ENCODE measurements at regions of chr11 and their contacts with region 1.

Region 1: DNA sequence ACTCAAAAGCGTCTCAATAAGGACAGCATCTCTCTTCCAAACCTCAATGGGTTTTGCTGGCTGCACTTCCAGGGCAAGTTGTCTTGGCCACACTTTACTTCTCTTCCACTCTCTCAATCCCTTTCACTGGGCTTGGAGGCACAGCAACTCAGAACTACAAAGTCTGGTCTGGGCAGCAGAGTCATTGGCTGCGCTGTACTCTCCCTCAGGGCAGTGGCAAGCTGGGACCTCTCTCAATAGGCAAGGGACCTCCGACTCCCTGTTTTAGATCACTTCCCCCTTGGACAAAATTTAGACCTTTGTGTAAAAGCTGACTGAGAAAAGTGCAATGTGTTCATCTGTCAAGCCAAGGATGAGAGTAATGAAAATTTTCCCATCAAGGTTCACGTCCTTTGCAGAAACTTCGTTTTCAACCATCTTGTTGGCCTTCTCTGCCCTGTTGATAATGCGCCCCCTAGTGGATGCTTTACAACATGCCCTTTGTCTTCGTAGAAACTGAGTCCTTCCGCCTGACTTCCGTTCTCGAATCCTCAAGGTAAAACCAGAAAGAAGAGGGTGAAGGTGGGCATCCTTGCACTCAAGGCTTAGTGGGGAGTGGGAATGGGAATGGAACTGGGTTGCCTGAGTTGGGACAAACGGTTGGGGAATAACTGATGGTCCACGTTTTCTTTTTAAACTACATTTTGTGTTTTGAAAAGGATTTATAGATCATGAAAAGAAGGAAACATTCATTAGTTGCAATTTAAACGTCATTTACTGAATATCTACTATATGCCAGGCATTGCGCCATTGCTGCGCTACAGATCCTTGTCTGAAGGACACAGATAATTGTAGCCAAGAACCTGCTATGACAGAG is 99.1 kb downstream of the CD44 start:
- DNase-seq: peak in 30 of 35 experiments; percentile 17 to 83 (median 36)
- ATAC-seq: no peak
- H3K4me3 ChIP-seq: no peak overlapping the region
- H3K4me3 Mint-ChIP-seq: no peak overlapping the region
- H3K27ac ChIP-seq: no peak overlapping the region
- H3K27ac Mint-ChIP-seq: peak overlapping the region; percentile 58 to 75
- H3K4me1 ChIP-seq: peaks cover 20 to 31% of the 10 kb centered on the region in 2 experiments
- H3K4me1 Mint-ChIP-seq: peaks cover 76 to 84% (median 80%) of the 10 kb centered on the region in 3 donors
- H3K27me3 ChIP-seq: no peaks in the 10 kb centered on the region
- H3K27me3 Mint-ChIP-seq: no peaks in the 10 kb centered on the region

Region 2: DNA sequence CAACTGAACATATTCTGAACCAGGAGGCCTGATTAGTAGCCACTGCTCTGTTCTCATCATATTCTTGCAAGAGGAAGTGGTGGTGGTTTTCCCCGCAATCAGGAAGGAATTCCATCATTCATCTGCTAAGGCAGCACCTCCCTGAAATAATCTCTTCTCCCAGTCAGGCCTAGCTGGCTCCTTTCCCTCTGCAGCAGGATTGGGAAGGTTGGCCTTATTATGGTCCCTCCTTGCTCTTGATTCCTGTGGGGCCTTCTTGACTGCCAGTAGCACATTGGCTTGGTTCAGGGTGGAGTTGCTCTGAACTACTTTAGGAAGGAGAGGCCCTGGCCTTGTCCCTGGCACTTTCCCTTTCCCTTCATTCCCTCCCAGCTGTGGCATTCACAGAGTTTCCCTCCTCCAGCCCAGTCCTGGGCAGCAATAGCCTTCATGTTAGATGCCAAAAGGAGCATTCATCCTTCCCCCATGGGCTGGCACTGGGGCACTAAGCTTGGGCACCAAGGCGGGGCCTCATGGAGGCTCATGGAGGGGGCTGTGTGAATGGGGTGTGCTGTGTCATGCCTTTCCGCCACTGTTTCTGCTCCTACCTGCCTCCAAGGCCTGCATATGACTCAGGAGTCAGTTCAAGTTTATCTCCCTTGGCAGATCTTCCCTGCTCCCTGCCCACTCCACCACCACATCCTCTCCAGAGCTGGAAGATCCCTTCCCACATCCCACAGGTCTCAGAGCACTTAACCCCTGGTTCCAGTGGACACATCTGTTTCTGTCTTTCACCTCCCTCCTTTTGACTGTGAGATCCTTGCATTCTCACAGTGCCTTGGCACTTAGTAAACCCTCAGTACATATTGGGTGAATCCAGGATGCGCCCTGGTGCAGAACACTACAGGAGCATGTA is 126.7 kb before region 1 on chr11:
- CTCF ChIA-PET with region 1: no interaction called
- POLR2A ChIA-PET with region 1: no interaction called
- DNase-seq: no peak
- ATAC-seq: no peak
- H3K4me3 ChIP-seq: no peak overlapping the region
- H3K4me3 Mint-ChIP-seq: peak overlapping the region in 1 of 3 donors; percentile 27
- H3K27ac ChIP-seq: no peak overlapping the region
- H3K27ac Mint-ChIP-seq: peak overlapping the region in 1 of 2 donors; percentile 6
- H3K4me1 ChIP-seq: peaks cover 14 to 26% of the 10 kb centered on the region in 2 experiments
- H3K4me1 Mint-ChIP-seq: peaks cover 57 to 67% (median 61%) of the 10 kb centered on the region in 3 donors
- H3K27me3 ChIP-seq: no peaks in the 10 kb centered on the region
- H3K27me3 Mint-ChIP-seq: no peaks in the 10 kb centered on the region

Region 3: GRCh38 chr11:35200811-35201341 is 37.2 kb before region 1 on chr11:
- CTCF ChIA-PET with region 1: no interaction called
- POLR2A ChIA-PET with region 1: no interaction called
- DNase-seq: no peak
- ATAC-seq: no peak
- H3K4me3 ChIP-seq: no peak overlapping the region
- H3K4me3 Mint-ChIP-seq: no peak overlapping the region
- H3K27ac ChIP-seq: no peak overlapping the region
- H3K27ac Mint-ChIP-seq: peak overlapping the region; percentile 13 to 79
- H3K4me1 ChIP-seq: peaks cover 0 to 5% of the 10 kb centered on the region in 2 experiments
- H3K4me1 Mint-ChIP-seq: peaks cover 78 to 88% (median 84%) of the 10 kb centered on the region in 3 donors
- H3K27me3 ChIP-seq: no peaks in the 10 kb centered on the region
- H3K27me3 Mint-ChIP-seq: no peaks in the 10 kb centered on the region

Region 4: DNA sequence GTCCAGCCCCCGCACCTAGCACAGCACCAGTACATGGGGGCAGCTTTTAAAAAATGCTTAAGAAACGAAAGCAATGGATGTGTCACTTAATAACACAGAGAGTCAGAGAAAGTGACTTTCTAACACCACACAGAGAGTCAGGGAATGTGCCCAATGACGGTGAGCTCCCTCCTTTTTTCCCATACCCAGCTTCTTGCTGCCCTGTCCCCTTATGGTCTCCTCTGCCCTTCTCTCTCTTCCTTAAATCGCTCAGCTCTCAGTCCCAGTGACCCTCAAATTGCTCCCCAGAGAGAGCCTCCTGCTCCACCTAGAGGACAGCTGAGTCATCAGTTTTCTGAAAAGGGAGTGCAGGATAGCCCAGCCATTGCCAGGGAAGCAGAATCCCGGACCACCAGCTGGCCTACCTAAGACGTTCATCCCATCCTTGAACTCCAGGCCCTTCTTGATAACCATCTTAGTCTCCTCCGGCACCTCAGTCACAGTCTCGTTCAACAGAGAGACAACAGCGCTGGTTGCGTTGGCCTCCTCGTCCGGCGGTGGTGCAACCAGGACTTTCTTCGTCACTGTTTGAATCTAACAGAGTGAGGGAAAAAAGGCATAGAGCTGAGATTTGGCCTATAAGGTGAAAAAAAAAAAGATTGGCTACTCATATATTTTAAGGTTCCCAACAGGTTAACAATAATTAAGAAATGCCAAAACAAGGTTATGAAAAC is 67.7 kb after region 1 on chr11:
- CTCF ChIA-PET with region 1: interaction called, 4 to 13 read pairs
- POLR2A ChIA-PET with region 1: interaction called in 1 of 2 experiments, 3 read pairs
- DNase-seq: peak in 32 of 35 experiments; percentile 6 to 72 (median 26)
- ATAC-seq: peak; percentile 58 to 85 (median 78)
- H3K4me3 ChIP-seq: no peak overlapping the region
- H3K4me3 Mint-ChIP-seq: peak overlapping the region; percentile 5 to 69 (median 68)
- H3K27ac ChIP-seq: no peak overlapping the region
- H3K27ac Mint-ChIP-seq: peak overlapping the region; percentile 80 to 89
- H3K4me1 ChIP-seq: peaks cover 0 to 11% of the 10 kb centered on the region in 2 experiments
- H3K4me1 Mint-ChIP-seq: peaks cover 23 to 34% (median 25%) of the 10 kb centered on the region in 3 donors
- H3K27me3 ChIP-seq: no peaks in the 10 kb centered on the region
- H3K27me3 Mint-ChIP-seq: no peaks in the 10 kb centered on the region

Region 5: GRCh38 chr11:36631774-36632173 is 1393.7 kb after region 1 on chr11:
- CTCF ChIA-PET with region 1: no interaction called
- POLR2A ChIA-PET with region 1: no interaction called
- DNase-seq: no peak
- ATAC-seq: peak in 1 of 4 experiments; percentile 14
- H3K4me3 ChIP-seq: no peak overlapping the region
- H3K4me3 Mint-ChIP-seq: no peak overlapping the region
- H3K27ac ChIP-seq: no peak overlapping the region
- H3K27ac Mint-ChIP-seq: no peak overlapping the region
- H3K4me1 ChIP-seq: no peaks in the 10 kb centered on the region
- H3K4me1 Mint-ChIP-seq: peaks cover 0 to 7% (median 0%) of the 10 kb centered on the region in 3 donors
- H3K27me3 ChIP-seq: no peaks in the 10 kb centered on the region
- H3K27me3 Mint-ChIP-seq: peaks cover 12% of the 10 kb centered on the region in 2 donors

Region 6: GRCh38 chr11:36746886-36747710 is 1509.0 kb after region 1 on chr11:
- CTCF ChIA-PET with region 1: no interaction called
- POLR2A ChIA-PET with region 1: no interaction called
- DNase-seq: peak; percentile 40 to 92 (median 71)
- ATAC-seq: peak; percentile 95 to 99 (median 97)
- H3K4me3 ChIP-seq: no peak overlapping the region
- H3K4me3 Mint-ChIP-seq: no peak overlapping the region
- H3K27ac ChIP-seq: no peak overlapping the region
- H3K27ac Mint-ChIP-seq: no peak overlapping the region
- H3K4me1 ChIP-seq: no peaks in the 10 kb centered on the region
- H3K4me1 Mint-ChIP-seq: peaks cover 6% of the 10 kb centered on the region in 3 donors
- H3K27me3 ChIP-seq: peaks cover 0 to 3% of the 10 kb centered on the region in 2 experiments
- H3K27me3 Mint-ChIP-seq: peaks cover 22 to 27% of the 10 kb centered on the region in 2 donors

Measured in T-cell (primary cell).